Activated CD4-positive, alpha-beta T cell treated with anti-CD3 and anti-CD28 coated beads, Interleukin-2, amount 10 ng/mL, durations not matched to agents 24 days and 14 days (primary cell): ENCODE measurements at regions of chrX and their contacts with region 1.

Region 1: DNA sequence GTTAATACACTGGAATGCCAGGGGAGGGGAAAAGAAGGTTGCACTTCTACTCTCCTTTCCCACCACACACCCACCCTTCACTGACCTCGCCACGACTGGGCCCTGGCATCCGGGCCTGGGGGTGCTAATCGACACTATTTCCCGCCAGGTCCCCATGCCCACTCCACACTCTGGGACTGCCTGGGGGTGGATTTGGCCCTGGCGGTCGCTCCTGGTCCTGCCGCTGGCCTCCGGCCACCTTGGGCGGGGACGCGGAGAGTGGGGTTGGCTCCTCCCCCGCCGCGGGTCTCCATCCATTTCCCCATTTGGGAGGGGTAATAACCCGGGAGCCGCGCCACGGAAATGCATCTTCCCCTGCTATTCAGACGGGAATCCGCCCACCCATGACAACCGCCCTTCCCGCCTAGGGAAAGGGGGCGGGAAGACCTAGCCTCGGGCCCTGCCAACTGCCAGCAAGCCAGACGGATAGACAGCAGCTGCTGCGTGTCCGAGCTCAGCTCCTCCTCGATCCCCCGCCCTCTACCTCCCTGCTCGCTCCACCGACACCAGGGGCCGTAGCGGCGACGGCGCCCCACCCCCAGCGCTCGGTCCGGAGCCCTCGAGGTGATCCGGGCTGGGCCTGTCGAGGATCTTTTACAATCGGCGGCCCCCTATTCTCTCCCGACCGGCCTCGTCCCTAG is 78.1 kb downstream of the RLIM start:
- DNase-seq: peak; percentile 75
- H3K4me3 Mint-ChIP-seq: peak overlapping the region; percentile 78
- H3K27ac Mint-ChIP-seq: peak overlapping the region; percentile 82
- H3K4me1 Mint-ChIP-seq: peaks cover 20% of the 10 kb centered on the region
- H3K27me3 Mint-ChIP-seq: no peaks in the 10 kb centered on the region

Region 2: GRCh38 chrX:74009041-74009440 is 527.3 kb before region 1 on chrX:
- intact Hi-C with region 1: no loop called
- DNase-seq: no peak
- H3K4me3 Mint-ChIP-seq: no peak overlapping the region
- H3K27ac Mint-ChIP-seq: no peak overlapping the region
- H3K4me1 Mint-ChIP-seq: no peaks in the 10 kb centered on the region
- H3K27me3 Mint-ChIP-seq: no peaks in the 10 kb centered on the region

Region 3: GRCh38 chrX:74382613-74383012 is 153.7 kb before region 1 on chrX:
- intact Hi-C with region 1: loop called (anchors 5 kb)
- DNase-seq: peak; percentile 81
- H3K4me3 Mint-ChIP-seq: no peak overlapping the region
- H3K27ac Mint-ChIP-seq: no peak overlapping the region
- H3K4me1 Mint-ChIP-seq: peaks cover 2% of the 10 kb centered on the region
- H3K27me3 Mint-ChIP-seq: peaks cover 3% of the 10 kb centered on the region

Region 4: DNA sequence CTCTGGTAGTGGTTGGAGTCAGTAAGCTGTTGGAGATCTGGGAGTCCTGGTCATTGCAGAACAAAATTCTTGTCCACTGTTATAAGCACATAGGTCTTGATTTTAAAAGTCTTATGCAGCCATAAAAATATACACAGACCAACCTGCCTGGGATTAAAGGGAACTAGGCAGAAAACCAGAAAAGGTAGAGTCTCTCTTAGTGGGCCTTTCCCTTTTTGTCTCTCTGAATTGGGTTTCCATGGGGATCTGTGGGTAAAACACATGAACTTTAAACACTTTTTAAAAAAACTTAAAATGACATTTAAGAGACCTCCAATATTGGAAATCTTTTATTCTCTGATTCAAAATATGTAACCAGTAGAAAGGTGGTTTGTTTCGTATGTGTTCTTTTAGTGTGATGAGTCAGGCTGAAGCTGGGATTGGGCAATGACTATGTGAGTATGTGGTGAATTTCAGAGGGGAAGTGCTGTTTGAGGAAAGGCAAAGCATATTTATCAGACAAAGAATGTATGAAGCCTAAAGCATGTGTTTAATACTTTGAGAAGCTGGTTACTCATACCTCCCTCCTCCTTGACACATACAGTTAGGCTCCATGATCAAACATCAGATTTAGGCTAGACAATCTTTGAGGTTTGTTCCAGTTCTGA is 85.4 kb before region 1 on chrX:
- intact Hi-C with region 1: loop called (anchors 1 kb)
- DNase-seq: no peak
- H3K4me3 Mint-ChIP-seq: no peak overlapping the region
- H3K27ac Mint-ChIP-seq: peak overlapping the region; percentile 78
- H3K4me1 Mint-ChIP-seq: peaks cover 4% of the 10 kb centered on the region
- H3K27me3 Mint-ChIP-seq: no peaks in the 10 kb centered on the region

Region 5: GRCh38 chrX:74579597-74580198 is 43.4 kb after region 1 on chrX:
- intact Hi-C with region 1: loop called (anchors 1 kb)
- DNase-seq: no peak
- H3K4me3 Mint-ChIP-seq: no peak overlapping the region
- H3K27ac Mint-ChIP-seq: peak overlapping the region; percentile 80
- H3K4me1 Mint-ChIP-seq: peaks cover 9% of the 10 kb centered on the region
- H3K27me3 Mint-ChIP-seq: no peaks in the 10 kb centered on the region